Activated naive CD4-positive, alpha-beta T cell treated with anti-CD3 and anti-CD28 coated beads, Interleukin-2, amount 10 ng/mL, durations not matched to agents 7 days and 5 days (primary cell): ENCODE measurements at regions of chr11 and their contacts with region 1.

Region 1: GRCh38 chr11:57345555-57346211 is 7.5 kb downstream of the P2RX3 start:
- DNase-seq: peak; percentile 78
- H3K4me3 Mint-ChIP-seq: no peak overlapping the region
- H3K27ac Mint-ChIP-seq: no peak overlapping the region
- H3K4me1 Mint-ChIP-seq: no peaks in the 10 kb centered on the region
- H3K27me3 Mint-ChIP-seq: peaks cover 53% of the 10 kb centered on the region

Region 2: GRCh38 chr11:57180081-57180561 is 165.6 kb before region 1 on chr11:
- CTCF ChIA-PET with region 1: no interaction called
- DNase-seq: no peak
- H3K4me3 Mint-ChIP-seq: no peak overlapping the region
- H3K27ac Mint-ChIP-seq: no peak overlapping the region
- H3K4me1 Mint-ChIP-seq: no peaks in the 10 kb centered on the region
- H3K27me3 Mint-ChIP-seq: peaks cover 31% of the 10 kb centered on the region

Region 3: DNA sequence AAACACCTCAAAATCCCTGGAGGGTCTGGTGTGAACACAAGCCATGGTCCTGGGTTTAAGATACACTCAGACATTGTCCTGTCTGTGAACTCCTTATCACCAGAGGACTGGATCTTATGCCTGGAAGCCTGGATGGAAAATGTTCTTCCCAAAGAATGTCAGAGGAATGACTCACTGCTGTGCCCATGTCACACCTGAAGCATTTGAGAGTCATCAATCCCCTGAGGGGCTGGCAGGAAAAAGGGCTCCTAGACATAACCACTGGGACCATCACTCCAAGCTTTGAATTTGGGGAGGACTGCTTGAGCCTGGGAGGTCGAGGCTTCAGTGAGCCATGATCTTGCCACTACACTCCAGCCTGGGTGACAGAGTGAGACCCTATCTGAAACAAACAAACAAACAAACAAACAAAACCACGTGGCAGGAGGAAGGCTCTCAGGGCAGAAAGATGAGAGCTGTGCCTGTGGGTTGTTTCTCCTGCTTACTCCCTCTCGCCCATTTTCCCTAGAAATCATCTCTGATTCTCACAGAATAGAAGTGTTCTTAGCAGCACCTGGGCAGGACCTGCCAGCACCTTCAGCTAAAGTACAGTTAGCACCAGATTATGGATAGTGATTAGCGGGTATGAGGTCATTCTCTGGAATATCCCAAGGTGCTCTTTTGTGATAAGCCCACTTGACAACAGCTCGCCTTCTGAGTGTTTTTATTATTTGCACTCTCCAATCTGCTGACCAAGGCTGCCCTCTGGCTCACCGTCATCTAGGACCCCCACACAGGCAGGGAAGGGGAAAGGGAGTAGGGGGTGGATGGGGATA is 56.7 kb after region 1 on chr11:
- CTCF ChIA-PET with region 1: no interaction called
- DNase-seq: no peak
- H3K4me3 Mint-ChIP-seq: no peak overlapping the region
- H3K27ac Mint-ChIP-seq: no peak overlapping the region
- H3K4me1 Mint-ChIP-seq: peaks cover 16% of the 10 kb centered on the region
- H3K27me3 Mint-ChIP-seq: no peaks in the 10 kb centered on the region

Region 4: GRCh38 chr11:57474017-57474802 is 128.5 kb after region 1 on chr11:
- CTCF ChIA-PET with region 1: interaction called, 22 read pairs
- DNase-seq: peak; percentile 77
- H3K4me3 Mint-ChIP-seq: peak overlapping the region; percentile 21
- H3K27ac Mint-ChIP-seq: peak overlapping the region; percentile 46
- H3K4me1 Mint-ChIP-seq: peaks cover 39% of the 10 kb centered on the region
- H3K27me3 Mint-ChIP-seq: peaks cover 65% of the 10 kb centered on the region

Region 5: GRCh38 chr11:57480409-57481137 is 134.9 kb after region 1 on chr11:
- CTCF ChIA-PET with region 1: interaction called, 22 read pairs
- DNase-seq: peak; percentile 86
- H3K4me3 Mint-ChIP-seq: no peak overlapping the region
- H3K27ac Mint-ChIP-seq: no peak overlapping the region
- H3K4me1 Mint-ChIP-seq: peaks cover 30% of the 10 kb centered on the region
- H3K27me3 Mint-ChIP-seq: peaks cover 83% of the 10 kb centered on the region